SK-N-SH (cell line): ENCODE measurements at regions of chrX and their contacts with region 1.

Region 1: DNA sequence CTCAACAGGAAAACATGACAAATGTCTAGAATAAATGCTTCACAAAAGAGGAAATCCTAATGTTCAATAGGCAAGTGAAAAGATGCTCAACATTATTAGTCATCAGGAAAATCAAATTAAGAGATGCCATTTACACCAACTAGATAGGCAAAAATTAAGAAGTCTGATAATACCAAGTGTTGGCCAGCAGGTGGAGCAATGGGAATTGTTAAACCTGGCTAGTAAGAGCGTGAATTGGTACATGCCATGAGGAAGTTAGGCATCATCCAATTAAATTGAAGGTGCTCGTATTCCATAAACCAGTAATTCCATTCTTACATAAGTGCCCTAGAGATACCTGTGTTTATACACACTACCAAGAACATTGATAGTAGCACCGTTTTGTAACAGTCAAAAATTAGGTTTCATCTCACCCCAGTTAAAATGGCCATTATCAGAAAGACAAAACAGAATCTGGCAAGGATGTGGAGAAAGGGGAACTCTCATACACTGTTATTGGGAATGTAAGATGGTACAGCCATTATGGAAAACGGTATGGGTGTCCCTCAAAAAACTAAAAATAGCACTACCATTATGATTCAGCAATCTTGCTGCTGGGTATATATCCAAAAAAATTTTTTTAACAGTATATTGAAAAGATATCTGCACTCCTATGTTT is 14.0 kb upstream of the ZCCHC18 start:
- DNase-seq: peak; percentile 52
- H3K4me3 ChIP-seq: no peak overlapping the region
- H3K27ac ChIP-seq: no peak overlapping the region
- H3K4me1 ChIP-seq: no peaks in the 10 kb centered on the region
- H3K27me3 ChIP-seq: no peaks in the 10 kb centered on the region; the same call in 1 of the 2 replicates
- CTCF ChIP-seq: peak; percentile 77
- EP300 ChIP-seq: no peak
- RAD21 ChIP-seq: peak; percentile 64

Region 2: DNA sequence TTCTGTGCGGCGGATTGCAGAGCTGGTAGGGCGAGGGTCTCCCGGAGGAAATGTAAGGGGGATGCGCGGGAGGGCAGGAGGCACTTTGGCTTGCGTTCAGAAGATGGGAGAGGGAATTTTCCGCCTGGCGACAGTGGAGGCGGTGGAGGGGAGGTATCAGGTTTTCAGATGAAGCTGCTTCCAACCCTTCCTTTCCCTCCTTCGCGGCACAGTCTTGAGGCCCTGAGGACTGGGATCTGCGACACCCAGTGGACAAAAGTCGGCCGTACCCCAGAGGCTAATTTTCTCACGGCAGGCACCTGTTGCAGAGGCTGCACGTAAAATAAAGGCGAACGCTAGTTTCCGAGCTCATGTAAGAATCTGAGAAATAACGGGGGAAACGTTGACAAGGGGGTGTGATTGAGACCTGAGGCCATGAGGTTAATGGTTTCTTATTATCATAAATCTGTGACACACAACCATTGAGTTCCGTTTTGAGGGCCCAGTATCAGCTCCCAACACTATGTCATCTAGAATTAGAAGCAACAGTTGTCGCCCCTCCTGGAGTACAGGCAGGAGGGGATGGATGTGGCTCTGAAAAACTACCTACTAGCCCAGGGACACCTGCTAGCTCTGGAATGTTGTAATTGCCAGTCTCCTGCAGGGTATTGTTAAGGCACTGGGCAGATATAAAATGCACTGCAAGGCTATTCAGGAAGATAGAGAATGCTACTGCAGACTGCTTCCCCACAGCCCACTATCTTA is 15.1 kb after region 1 on chrX:
- CTCF ChIA-PET with region 1: interaction called, 12 read pairs
- POLR2A ChIA-PET with region 1: interaction called, 3 read pairs
- DNase-seq: peak; percentile 53
- H3K4me3 ChIP-seq: peak overlapping the region; percentile 49 to 85
- H3K27ac ChIP-seq: peak overlapping the region; percentile 22 to 65; a peak in 3 of 4 replicates
- H3K4me1 ChIP-seq: peaks cover 0 to 15% of the 10 kb centered on the region in 2 experiments; a peak in 1 of 4 replicates
- H3K27me3 ChIP-seq: peaks cover 15% of the 10 kb centered on the region; the same call in 1 of the 2 replicates
- CTCF ChIP-seq: peak; percentile 60
- EP300 ChIP-seq: no peak
- RAD21 ChIP-seq: peak; percentile 42